GM18951 (cell line): ENCODE measurements at regions of chr1 and their contacts with region 1.

Region 1: GRCh38 chr1:181189691-181190363 is 101.3 kb downstream of the IER5 start:
- POLR2A ChIP-seq: no peak

Region 2: DNA sequence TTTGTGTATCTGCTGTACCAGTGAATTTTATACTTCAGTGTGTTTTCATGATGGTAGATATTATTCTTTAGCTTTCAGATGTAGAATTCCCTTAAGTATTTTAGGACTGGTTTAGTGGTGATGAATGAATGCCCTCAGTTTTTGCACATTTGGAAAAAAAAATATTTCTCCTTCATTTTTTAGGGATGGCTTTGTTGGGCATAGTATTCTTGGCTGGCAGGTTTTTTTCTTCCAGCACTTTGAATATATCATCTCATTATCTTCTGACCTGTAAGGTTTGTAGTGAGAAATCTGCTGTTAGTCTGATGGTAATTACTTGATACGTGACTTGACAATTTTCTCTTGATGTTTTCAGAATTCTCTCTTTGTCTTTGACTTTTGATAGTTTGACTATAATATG is 491.2 kb before region 1 on chr1:
- in situ Hi-C with region 1: no loop called
- POLR2A ChIP-seq: no peak

Region 3: GRCh38 chr1:181397845-181398244 is 208.0 kb after region 1 on chr1:
- in situ Hi-C with region 1: no loop called
- POLR2A ChIP-seq: no peak

Region 4: GRCh38 chr1:181424786-181425403 is 235.1 kb after region 1 on chr1:
- in situ Hi-C with region 1: loop called (anchors 5 kb)
- POLR2A ChIP-seq: no peak